ENCODE measurements at regions of chr2 and their contacts with region 1.

Region 1: DNA sequence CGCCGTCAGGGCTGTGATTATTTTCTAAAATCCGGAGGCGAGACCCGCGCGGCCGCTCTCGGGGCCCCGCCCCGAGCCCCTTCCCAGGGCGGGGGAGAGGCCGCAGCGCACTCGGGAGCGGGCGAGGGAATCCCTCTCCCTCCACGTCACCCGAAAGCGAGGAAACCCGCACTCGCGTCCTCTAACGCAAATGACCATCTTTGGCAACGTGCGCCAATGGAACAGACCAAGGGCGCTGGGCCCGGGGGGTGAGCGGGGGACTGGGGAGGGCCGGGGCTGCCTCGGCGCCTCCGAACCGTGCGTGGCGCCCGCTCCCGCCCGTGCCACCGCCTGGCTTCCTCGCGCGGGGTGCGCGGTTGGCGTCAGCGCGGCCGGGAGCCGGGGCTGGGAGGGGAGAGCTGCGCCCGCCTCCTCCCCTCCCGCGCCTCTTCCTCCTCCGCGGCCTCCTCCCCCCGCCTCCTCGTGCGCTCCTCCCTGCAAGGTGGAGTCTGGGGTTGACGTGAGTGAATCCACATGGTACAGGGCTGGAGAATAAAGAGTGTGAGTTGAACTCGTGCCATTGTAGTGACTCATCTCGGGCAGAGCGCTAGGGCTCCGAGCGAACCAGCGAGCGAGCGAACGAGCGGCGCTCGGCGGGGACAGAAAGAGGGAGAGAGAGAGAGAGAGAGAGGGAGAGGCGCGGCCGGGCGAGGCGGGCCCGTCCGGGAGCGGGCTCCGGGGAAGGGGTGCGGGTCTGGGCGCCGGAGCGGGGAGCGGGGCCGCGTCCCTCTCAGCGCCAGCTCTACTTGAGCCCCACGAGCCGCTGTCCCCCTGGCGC is at the start of gene FOSL2:
- DNase-seq: peak; percentile 99
- H3K4me3 ChIP-seq: peak within 1 kb of the TSS; percentile 96 to 99 (median 98)
- H3K27ac ChIP-seq: peak within 1 kb of the TSS; percentile 97 to 100 (median 100)
- H3K4me1 ChIP-seq: peaks cover 0 to 28% (median 19%) of the 10 kb centered on the region in 4 donors
- H3K27me3 ChIP-seq: no peaks in the 10 kb centered on the region
- CTCF ChIP-seq: no peak
- EP300 ChIP-seq: peak; percentile 76 to 98 (median 85)
- POLR2A ChIP-seq: peak; percentile 98 to 99
- total RNA-seq, gene FOSL2: 38.9 to 208 (median 67.3) TPM

Region 2: GRCh38 chr2:27723372-27724144 is 668.9 kb before region 1 on chr2:
- intact Hi-C with region 1: loop called (anchors 5 kb)
- DNase-seq: peak; percentile 88
- H3K4me3 ChIP-seq: no peak overlapping the region
- H3K27ac ChIP-seq: peak overlapping the region; percentile 54 to 83 (median 74)
- H3K4me1 ChIP-seq: peaks cover 0 to 26% (median 20%) of the 10 kb centered on the region in 4 donors
- H3K27me3 ChIP-seq: no peaks in the 10 kb centered on the region
- CTCF ChIP-seq: peak; percentile 58 to 84 (median 81)
- EP300 ChIP-seq: no peak
- POLR2A ChIP-seq: no peak

Region 3: GRCh38 chr2:27779417-27780055 is 613.0 kb before region 1 on chr2:
- intact Hi-C with region 1: loop called (anchors 2 kb)
- DNase-seq: no peak
- H3K4me3 ChIP-seq: no peak overlapping the region
- H3K27ac ChIP-seq: peak overlapping the region; percentile 66 to 96 (median 94)
- H3K4me1 ChIP-seq: peaks cover 0 to 61% (median 57%) of the 10 kb centered on the region in 4 donors
- H3K27me3 ChIP-seq: no peaks in the 10 kb centered on the region
- CTCF ChIP-seq: no peak
- EP300 ChIP-seq: peak in 1 of 4 donors; percentile 12
- POLR2A ChIP-seq: no peak

Region 4: DNA sequence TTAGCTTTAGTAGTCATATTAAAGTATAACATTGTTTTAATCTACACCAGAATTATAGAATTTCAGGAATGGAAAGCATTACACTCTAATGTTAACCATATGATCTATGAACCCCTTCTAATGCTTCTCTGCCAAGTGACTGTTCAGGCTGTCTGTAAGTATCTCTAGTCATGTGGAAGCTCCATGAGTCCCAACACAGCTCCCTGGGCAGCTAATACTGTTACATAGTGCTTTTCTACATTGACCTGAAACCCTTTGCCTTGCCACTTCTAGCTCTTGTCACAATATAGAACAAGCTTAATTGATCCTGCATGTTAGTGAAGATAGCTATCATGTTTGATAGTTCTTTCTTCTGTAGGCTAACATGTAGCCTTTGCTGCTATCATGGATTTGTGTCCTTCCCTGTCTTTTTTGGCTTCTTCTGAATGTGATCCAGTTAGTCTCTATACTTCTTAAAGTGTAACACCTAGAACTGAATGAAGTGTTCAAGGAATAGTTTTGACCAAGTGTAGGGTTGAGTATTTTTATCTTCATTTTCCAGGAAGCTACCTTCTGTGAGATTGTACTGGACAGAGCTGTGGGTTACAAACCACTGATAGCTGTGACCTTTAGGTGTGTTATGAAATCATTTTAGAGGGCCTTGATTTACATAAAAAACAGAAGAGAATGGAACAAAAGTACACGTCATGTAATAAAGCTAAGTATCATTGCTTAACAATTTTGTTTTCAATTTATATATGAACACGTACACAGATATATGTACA is 478.3 kb before region 1 on chr2:
- intact Hi-C with region 1: loop called (anchors 2 kb)
- DNase-seq: no peak
- H3K4me3 ChIP-seq: no peak overlapping the region
- H3K27ac ChIP-seq: peak overlapping the region; percentile 75 to 83 (median 81)
- H3K4me1 ChIP-seq: peaks cover 0 to 36% (median 33%) of the 10 kb centered on the region in 4 donors
- H3K27me3 ChIP-seq: no peaks in the 10 kb centered on the region
- CTCF ChIP-seq: no peak
- EP300 ChIP-seq: no peak
- POLR2A ChIP-seq: no peak

Region 5: DNA sequence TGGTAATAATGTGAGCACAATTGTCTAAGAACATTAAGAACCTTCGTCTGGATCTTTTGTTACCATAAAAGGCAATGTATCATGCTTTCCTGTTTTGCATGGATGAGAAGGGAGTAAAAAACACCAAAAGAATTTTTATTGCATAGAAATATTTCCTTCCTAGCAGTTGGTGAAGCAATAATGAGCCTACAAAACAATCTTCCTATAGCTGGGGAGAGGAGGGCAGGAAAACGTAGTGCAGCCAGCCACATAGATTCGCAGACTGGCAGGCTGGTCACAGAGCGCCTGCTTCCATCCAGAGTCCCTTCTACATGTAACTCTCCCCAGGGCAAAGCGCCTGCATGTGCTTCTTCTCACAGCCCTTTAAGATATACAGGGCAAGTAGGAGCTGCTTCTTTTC is 311.6 kb before region 1 on chr2:
- intact Hi-C with region 1: loop called (anchors 5 kb)
- DNase-seq: peak; percentile 74
- H3K4me3 ChIP-seq: no peak overlapping the region
- H3K27ac ChIP-seq: peak overlapping the region; percentile 50 to 75 (median 70)
- H3K4me1 ChIP-seq: peaks cover 0 to 44% (median 30%) of the 10 kb centered on the region in 4 donors
- H3K27me3 ChIP-seq: no peaks in the 10 kb centered on the region
- CTCF ChIP-seq: no peak
- EP300 ChIP-seq: peak in 1 of 4 donors; percentile 6
- POLR2A ChIP-seq: no peak

Region 6: DNA sequence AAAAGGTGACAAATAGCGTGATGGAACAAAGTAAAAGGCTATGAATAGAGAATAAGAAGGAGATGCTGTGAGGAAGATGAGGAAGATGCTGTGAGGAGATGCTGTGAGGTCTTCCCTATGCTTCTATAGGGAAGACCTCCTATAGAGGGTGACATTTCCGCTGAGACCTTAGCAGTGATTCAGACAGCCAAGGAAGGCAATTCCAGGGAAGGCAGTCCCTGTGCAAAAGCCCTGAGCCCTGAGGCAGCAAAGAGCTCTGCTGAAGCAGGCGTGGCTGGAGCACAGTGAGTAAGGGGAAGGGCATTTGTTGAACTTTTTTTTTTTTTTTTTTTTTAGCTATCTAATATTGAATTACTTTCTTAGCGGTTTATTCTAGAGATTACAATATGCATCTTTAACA is 142.5 kb before region 1 on chr2:
- intact Hi-C with region 1: no loop called
- DNase-seq: no peak
- H3K4me3 ChIP-seq: no peak overlapping the region
- H3K27ac ChIP-seq: no peak overlapping the region
- H3K4me1 ChIP-seq: peaks cover 0 to 6% (median 2%) of the 10 kb centered on the region in 4 donors
- H3K27me3 ChIP-seq: no peaks in the 10 kb centered on the region
- CTCF ChIP-seq: no peak
- EP300 ChIP-seq: no peak
- POLR2A ChIP-seq: no peak

Region 7: GRCh38 chr2:28300485-28301341 is 91.8 kb before region 1 on chr2:
- intact Hi-C with region 1: loop called (anchors 1 kb)
- DNase-seq: peak; percentile 77
- H3K4me3 ChIP-seq: peak overlapping the region; percentile 13 to 36 (median 26)
- H3K27ac ChIP-seq: peak overlapping the region; percentile 72 to 89 (median 82)
- H3K4me1 ChIP-seq: peaks cover 0 to 20% (median 19%) of the 10 kb centered on the region in 4 donors
- H3K27me3 ChIP-seq: no peaks in the 10 kb centered on the region
- CTCF ChIP-seq: no peak
- EP300 ChIP-seq: peak; percentile 86 to 97 (median 96)
- POLR2A ChIP-seq: no peak

Region 8: GRCh38 chr2:28624793-28625701 is 232.5 kb after region 1 on chr2:
- intact Hi-C with region 1: loop called (anchors 5 kb)
- DNase-seq: peak; percentile 87
- H3K4me3 ChIP-seq: peak overlapping the region in 2 of 4 donors; percentile 6 to 23
- H3K27ac ChIP-seq: peak overlapping the region; percentile 90 to 94 (median 92)
- H3K4me1 ChIP-seq: peaks cover 0 to 87% (median 76%) of the 10 kb centered on the region in 4 donors
- H3K27me3 ChIP-seq: no peaks in the 10 kb centered on the region
- CTCF ChIP-seq: peak in 1 of 4 experiments; percentile 14
- EP300 ChIP-seq: peak in 2 of 4 donors; percentile 24 to 43
- POLR2A ChIP-seq: no peak